ENCODE measurements at regions of chr10 and their contacts with region 1.

Region 1: GRCh38 chr10:67666416-67667034 is 29.5 kb downstream of the CTNNA3 start:
- DNase-seq: peak; percentile 30
- ATAC-seq: no peak
- H3K4me3 ChIP-seq: no peak overlapping the region
- H3K27ac ChIP-seq: no peak overlapping the region
- H3K4me1 ChIP-seq: no peaks in the 10 kb centered on the region
- H3K27me3 ChIP-seq: no peaks in the 10 kb centered on the region
- CTCF ChIP-seq: peak; percentile 44
- POLR2A ChIP-seq: no peak
- RAD21 ChIP-seq: peak; percentile 39

Region 2: DNA sequence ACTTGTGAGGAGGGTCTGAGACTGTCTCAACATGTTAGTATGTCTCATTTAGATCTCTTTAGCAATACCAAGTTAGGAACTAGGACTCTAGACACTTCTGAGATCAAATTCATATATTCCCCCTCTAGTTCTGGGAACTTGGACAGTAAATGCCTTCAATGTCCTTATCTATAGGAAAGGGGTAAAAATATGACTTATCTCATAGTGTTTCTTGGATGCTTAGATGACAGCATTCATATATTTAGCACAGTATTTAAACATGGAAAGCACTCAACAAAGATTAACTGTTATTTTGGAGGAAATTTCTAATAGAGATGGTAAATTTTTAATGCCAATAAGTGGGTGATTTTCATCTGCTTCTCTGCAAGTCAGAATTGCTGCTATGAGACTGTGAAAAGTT is 125.1 kb before region 1 on chr10:
- CTCF ChIA-PET with region 1: no interaction called
- POLR2A ChIA-PET with region 1: no interaction called
- dilution Hi-C with region 1: no loop called
- in situ Hi-C with region 1: no loop called
- intact Hi-C with region 1: loop called (anchors 5 kb)
- DNase-seq: no peak
- ATAC-seq: no peak; the same call in 1 of the 2 replicates
- H3K4me3 ChIP-seq: no peak overlapping the region
- H3K27ac ChIP-seq: no peak overlapping the region
- H3K4me1 ChIP-seq: no peaks in the 10 kb centered on the region; the same call in 1 of the 2 replicates
- H3K27me3 ChIP-seq: no peaks in the 10 kb centered on the region
- CTCF ChIP-seq: no peak
- POLR2A ChIP-seq: no peak
- RAD21 ChIP-seq: no peak